WTC11 (cell line): ENCODE measurements at regions of chr3 and their contacts with region 1.

Region 1: DNA sequence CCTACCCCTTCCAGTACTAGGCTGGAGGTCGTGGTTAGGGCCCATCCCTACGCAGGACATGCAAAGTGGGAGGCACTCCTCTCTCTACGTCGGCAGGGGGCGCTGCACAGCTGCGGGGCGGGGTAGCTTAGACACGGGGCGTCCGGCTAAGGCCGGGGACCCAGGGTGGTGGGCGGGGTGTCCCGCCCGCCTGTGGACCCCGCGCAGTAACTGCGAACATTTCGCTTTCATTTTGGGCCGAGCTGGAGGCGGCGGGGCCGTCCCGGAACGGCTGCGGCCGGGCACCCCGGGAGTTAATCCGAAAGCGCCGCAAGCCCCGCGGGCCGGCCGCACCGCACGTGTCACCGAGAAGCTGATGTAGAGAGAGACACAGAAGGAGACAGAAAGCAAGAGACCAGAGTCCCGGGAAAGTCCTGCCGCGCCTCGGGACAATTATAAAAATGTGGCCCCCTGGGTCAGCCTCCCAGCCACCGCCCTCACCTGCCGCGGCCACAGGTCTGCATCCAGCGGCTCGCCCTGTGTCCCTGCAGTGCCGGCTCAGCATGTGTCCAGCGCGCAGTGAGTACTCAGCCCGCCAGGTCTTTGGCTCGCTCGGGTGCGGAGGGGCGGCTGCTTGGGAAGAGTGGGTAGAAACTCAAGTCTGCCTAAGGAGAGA is at the start of gene IL12A:
- DNase-seq: peak; percentile 87
- ATAC-seq: peak; percentile 97
- H3K4me3 Mint-ChIP-seq: peak within 1 kb of the TSS; percentile 75
- H3K27ac Mint-ChIP-seq: no peak within 1 kb of the TSS
- H3K4me1 Mint-ChIP-seq: peaks cover 24% of the 10 kb centered on the region
- H3K27me3 Mint-ChIP-seq: peaks cover 33% of the 10 kb centered on the region
- CTCF ChIP-seq: peak; percentile 96
- total RNA-seq, gene IL12A: 0.69 to 1.0 TPM (median 0.69 TPM) in 3 replicates

Region 2: GRCh38 chr3:159813822-159814523 is 174.8 kb before region 1 on chr3:
- CTCF ChIA-PET with region 1: interaction called, 10 read pairs
- POLR2A ChIA-PET with region 1: no interaction called
- DNase-seq: peak; percentile 19
- ATAC-seq: peak; percentile 96
- H3K4me3 Mint-ChIP-seq: no peak overlapping the region
- H3K27ac Mint-ChIP-seq: 0 out of 2 replicates have a peak overlapping the region, but pooled peaks have one; percentile 45
- H3K4me1 Mint-ChIP-seq: peaks cover 27% of the 10 kb centered on the region
- H3K27me3 Mint-ChIP-seq: no peaks in the 10 kb centered on the region
- CTCF ChIP-seq: no peak

Region 3: GRCh38 chr3:159929435-159930141 is 59.2 kb before region 1 on chr3:
- CTCF ChIA-PET with region 1: interaction called, 11 read pairs
- POLR2A ChIA-PET with region 1: no interaction called
- DNase-seq: no peak
- ATAC-seq: peak; percentile 81
- H3K4me3 Mint-ChIP-seq: no peak overlapping the region
- H3K27ac Mint-ChIP-seq: no peak overlapping the region
- H3K4me1 Mint-ChIP-seq: peaks cover 4% of the 10 kb centered on the region
- H3K27me3 Mint-ChIP-seq: peaks cover 2% of the 10 kb centered on the region; the same call in 1 of the 2 replicates
- CTCF ChIP-seq: no peak

Region 4: DNA sequence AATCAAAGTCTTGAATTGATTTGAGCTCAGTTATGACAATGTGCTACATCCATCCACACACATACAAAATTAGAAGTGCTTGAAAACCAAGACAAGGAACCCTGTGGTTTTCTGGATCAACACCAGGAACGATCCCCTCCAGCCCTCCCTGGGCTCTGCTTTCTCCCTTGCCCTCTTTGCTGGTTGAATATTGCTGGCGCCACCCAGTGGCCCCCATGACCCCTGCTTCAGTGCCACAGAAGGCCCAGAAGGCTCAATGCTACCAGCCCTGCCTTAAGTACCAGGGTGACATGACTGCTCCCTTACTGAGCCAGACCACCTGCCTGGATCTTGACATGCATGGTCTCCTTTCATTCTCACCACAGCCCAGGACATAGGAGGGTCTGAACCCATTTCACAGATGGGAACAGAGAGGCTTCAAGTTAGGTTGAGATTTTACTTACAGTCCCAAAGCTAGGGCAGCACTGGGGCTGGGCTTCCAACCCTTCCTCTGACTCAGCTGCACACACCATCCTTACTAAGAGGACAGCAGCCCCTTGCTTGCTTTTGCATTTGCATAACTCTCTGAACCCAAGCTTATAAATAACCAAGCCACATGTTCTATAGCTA is 14.9 kb after region 1 on chr3:
- CTCF ChIA-PET with region 1: interaction called, 45 read pairs
- POLR2A ChIA-PET with region 1: interaction called, 8 read pairs
- DNase-seq: peak; percentile 78
- ATAC-seq: peak; percentile 97
- H3K4me3 Mint-ChIP-seq: no peak overlapping the region
- H3K27ac Mint-ChIP-seq: no peak overlapping the region
- H3K4me1 Mint-ChIP-seq: peaks cover 17% of the 10 kb centered on the region
- H3K27me3 Mint-ChIP-seq: no peaks in the 10 kb centered on the region
- CTCF ChIP-seq: peak; percentile 35; the same call in 1 of the 2 replicates

Region 5: DNA sequence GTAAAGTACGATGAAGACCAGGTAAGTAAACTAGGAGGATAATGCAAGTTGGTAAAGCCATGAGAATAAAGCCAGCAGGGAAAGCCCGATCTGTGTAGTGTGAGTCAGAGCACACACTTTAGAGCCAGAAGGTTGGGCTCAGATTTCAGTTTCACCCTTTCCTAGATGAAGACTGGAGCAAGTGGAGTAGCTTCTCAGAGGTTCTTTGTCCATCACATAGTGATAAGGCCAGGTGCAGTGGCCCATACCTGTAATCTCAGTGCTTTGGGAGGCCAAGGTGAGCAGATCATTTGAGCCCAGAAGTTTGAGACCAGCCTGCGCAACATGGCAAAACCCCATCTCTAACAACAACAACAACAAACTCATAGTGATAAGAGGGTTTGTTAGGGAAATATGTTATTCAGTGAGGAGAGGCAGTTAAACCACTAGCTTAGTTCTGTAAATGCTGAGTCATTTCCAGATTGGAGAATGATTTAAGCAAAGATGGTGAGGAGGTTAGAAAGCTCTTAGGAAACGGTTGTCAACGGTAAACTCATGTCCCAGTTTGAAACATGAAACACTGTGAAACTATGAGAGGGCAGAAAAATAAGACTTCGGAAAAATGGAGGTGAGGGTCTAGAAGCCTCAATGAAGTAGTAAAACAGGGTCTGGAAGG is 38.9 kb after region 1 on chr3:
- CTCF ChIA-PET with region 1: interaction called, 15 read pairs
- POLR2A ChIA-PET with region 1: no interaction called
- DNase-seq: no peak
- ATAC-seq: no peak
- H3K4me3 Mint-ChIP-seq: no peak overlapping the region
- H3K27ac Mint-ChIP-seq: no peak overlapping the region
- H3K4me1 Mint-ChIP-seq: no peaks in the 10 kb centered on the region
- H3K27me3 Mint-ChIP-seq: peaks cover 2% of the 10 kb centered on the region; the same call in 1 of the 2 replicates
- CTCF ChIP-seq: no peak